SK-N-SH (cell line): ENCODE measurements at regions of chr21 and their contacts with region 1.

Region 1: GRCh38 chr21:38985568-38986378 is 180.0 kb downstream of the ETS2 start:
- DNase-seq: peak; percentile 84
- H3K4me3 ChIP-seq: peak overlapping the region; percentile 10 to 16; a peak in 3 of 4 replicates
- H3K27ac ChIP-seq: peak overlapping the region; percentile 79 to 99
- H3K4me1 ChIP-seq: peaks cover 28 to 70% of the 10 kb centered on the region in 2 experiments
- H3K27me3 ChIP-seq: no peaks in the 10 kb centered on the region
- CTCF ChIP-seq: no peak
- EP300 ChIP-seq: peak in 1 of 2 experiments; percentile 96; a peak in 2 of 4 replicates
- RAD21 ChIP-seq: peak; percentile 10

Region 2: DNA sequence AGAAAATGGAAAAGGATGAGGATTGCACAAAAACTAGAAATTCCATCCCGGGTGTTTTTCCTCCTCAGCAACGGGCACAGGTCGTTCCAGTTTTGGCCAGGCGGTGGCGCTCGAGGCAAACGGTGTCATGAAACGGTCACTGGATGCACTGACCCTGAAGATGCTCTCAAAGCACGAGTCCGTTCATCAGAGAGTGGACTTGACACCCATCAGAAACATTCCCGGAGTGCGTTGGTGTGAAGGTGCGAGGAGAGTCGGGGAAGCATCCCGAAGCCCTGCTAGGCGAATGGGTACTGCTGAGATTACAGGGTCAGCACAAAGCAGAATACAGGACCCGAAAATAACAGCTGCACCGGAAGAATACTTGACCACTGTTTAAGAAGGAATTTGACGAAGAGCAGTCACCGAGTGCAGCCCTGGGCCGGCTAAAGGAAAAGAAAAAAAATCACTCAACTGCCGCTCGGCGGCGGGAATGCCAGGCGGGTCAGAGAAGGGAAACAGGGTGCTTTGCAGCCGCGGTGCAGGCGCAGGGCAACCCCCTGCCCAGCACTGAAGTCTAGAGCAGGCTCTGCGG is 251.7 kb before region 1 on chr21:
- CTCF ChIA-PET with region 1: interaction called, 15 read pairs
- POLR2A ChIA-PET with region 1: no interaction called
- DNase-seq: peak; percentile 81
- H3K4me3 ChIP-seq: peak overlapping the region; percentile 30 to 51
- H3K27ac ChIP-seq: peak overlapping the region; percentile 5 to 78; a peak in 3 of 4 replicates
- H3K4me1 ChIP-seq: peaks cover 5 to 6% of the 10 kb centered on the region in 2 experiments; a peak in 3 of 4 replicates
- H3K27me3 ChIP-seq: no peaks in the 10 kb centered on the region
- CTCF ChIP-seq: peak; percentile 94
- EP300 ChIP-seq: peak in 1 of 2 experiments; percentile 18; a peak in 1 of 4 replicates
- RAD21 ChIP-seq: peak; percentile 99

Region 3: DNA sequence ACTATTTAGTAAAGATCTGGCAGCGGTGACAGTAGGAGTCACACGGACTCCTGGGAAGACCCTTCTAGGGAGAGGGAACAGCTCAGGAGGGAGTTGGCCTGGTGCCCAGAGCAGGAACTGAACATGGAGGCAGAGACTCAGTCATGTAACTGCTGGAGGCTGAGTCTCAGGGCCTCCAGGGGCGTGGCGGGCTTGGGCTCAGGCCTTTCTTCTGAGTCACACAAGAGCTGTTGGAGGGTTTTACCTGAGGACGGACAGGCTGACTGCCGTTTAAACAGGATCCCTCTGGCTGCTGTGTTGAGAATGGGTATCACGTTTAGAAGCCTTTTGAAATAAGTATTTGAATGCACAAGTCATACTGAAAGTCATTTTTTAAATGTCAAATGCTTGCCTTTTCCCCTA is 187.3 kb before region 1 on chr21:
- CTCF ChIA-PET with region 1: no interaction called
- POLR2A ChIA-PET with region 1: interaction called, 12 read pairs
- DNase-seq: peak; percentile 40
- H3K4me3 ChIP-seq: no peak overlapping the region
- H3K27ac ChIP-seq: peak overlapping the region; percentile 53 to 91; a peak in 3 of 4 replicates
- H3K4me1 ChIP-seq: peaks cover 16 to 45% of the 10 kb centered on the region in 2 experiments
- H3K27me3 ChIP-seq: no peaks in the 10 kb centered on the region
- CTCF ChIP-seq: no peak
- EP300 ChIP-seq: no peak
- RAD21 ChIP-seq: no peak

Region 4: GRCh38 chr21:38805328-38806152 is 180.2 kb before region 1 on chr21 and contains the start of gene ETS2:
- CTCF ChIA-PET with region 1: interaction called, 7 read pairs
- POLR2A ChIA-PET with region 1: interaction called, 13 read pairs
- DNase-seq: peak; percentile 91
- H3K4me3 ChIP-seq: peak within 1 kb of the TSS; percentile 68 to 86
- H3K27ac ChIP-seq: peak within 1 kb of the TSS; percentile 62 to 95
- H3K4me1 ChIP-seq: peaks cover 17 to 43% of the 10 kb centered on the region in 2 experiments
- H3K27me3 ChIP-seq: no peaks in the 10 kb centered on the region
- CTCF ChIP-seq: no peak
- EP300 ChIP-seq: no peak
- RAD21 ChIP-seq: no peak; the same call in 1 of the 2 replicates
- polyA plus RNA-seq, gene ETS2: 14.2 and 16.3 TPM in 2 replicates

Region 5: DNA sequence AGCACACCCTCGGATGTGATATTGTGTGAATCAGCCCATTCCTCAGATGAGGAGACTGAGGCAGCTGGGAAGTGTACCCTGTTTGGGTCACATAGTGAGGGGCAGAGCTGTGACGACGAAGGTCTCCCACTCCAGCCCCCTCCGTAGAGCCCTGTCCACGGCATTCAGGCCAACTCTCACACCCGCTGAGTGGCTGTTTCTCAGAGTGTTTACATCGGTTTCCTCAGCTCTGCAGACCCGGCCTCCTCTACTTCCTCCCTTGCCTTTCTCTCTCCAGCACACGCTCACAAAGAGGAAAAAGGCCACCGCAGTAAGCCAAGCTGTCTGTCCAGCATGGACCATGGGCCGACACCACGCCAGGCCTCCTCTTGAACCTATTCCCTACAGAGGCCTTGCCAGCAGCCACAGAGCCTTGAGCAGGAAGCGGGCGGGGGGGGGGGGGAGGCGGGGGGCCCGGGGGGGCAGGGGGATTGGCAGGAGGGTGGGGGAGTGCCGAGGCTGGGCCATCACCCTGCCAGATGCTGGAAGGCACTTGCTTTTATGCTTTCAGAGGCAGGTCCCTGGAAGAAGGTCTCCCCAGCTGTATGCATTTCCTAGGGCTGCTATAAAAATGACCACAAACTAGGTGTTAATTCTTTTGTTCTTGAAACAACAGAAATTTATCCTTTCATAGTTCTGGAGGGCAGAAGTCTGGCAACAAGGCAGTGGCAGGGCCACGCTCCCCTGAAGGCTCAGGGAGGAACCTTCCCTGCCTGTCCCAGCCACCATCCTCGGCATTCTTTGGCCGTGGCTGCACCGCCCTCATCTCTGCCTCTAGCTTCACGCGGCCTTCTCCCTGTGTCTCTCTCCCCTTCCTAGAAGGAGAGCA is 19.1 kb after region 1 on chr21:
- CTCF ChIA-PET with region 1: interaction called, 4 read pairs
- POLR2A ChIA-PET with region 1: interaction called, 11 read pairs
- DNase-seq: peak; percentile 83
- H3K4me3 ChIP-seq: no peak overlapping the region
- H3K27ac ChIP-seq: peak overlapping the region in 1 of 2 experiments; percentile 11; a peak in 2 of 4 replicates
- H3K4me1 ChIP-seq: peaks cover 4 to 33% of the 10 kb centered on the region in 2 experiments; a peak in 3 of 4 replicates
- H3K27me3 ChIP-seq: no peaks in the 10 kb centered on the region
- CTCF ChIP-seq: no peak
- EP300 ChIP-seq: no peak
- RAD21 ChIP-seq: no peak

Region 6: DNA sequence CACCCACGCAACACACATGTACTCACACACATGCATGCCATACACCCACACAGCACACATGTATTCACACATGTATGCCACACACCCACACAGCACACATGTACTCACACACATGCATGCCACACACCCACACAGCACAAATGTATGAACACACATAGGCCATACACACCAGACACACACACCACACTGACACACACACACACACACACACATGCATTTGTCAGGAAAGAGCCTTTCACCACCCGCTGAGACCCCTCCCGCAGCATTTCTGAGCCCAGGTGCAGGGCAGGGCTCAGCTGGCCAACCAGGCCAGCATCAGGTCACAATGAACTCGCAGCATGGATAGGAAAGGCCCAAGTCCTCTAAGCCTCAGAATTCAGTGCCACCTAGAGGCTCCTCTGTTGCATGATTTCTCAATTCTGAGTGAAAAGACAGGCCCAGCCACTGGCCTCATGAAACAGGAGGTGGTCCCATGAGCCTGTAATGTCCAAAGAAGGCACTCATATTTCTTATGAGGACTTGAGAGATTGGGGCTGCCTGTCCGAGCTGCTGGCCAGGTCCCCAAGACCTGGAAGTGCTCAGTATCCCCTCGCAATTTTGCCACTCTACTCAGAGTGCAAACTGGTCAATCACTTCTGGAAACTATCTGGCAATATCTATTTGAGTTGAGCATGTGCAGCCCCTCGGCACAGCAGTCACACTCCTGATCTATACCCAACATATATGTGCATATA is 140.1 kb after region 1 on chr21:
- CTCF ChIA-PET with region 1: interaction called, 42 read pairs
- POLR2A ChIA-PET with region 1: interaction called, 5 read pairs
- DNase-seq: peak; percentile 70
- H3K4me3 ChIP-seq: no peak overlapping the region
- H3K27ac ChIP-seq: no peak overlapping the region
- H3K4me1 ChIP-seq: peaks cover 0 to 8% of the 10 kb centered on the region in 2 experiments; a peak in 1 of 4 replicates
- H3K27me3 ChIP-seq: no peaks in the 10 kb centered on the region
- CTCF ChIP-seq: peak; percentile 72
- EP300 ChIP-seq: no peak
- RAD21 ChIP-seq: peak; percentile 93